ENCODE measurements at regions of chr1 and their contacts with region 1.

Region 1: DNA sequence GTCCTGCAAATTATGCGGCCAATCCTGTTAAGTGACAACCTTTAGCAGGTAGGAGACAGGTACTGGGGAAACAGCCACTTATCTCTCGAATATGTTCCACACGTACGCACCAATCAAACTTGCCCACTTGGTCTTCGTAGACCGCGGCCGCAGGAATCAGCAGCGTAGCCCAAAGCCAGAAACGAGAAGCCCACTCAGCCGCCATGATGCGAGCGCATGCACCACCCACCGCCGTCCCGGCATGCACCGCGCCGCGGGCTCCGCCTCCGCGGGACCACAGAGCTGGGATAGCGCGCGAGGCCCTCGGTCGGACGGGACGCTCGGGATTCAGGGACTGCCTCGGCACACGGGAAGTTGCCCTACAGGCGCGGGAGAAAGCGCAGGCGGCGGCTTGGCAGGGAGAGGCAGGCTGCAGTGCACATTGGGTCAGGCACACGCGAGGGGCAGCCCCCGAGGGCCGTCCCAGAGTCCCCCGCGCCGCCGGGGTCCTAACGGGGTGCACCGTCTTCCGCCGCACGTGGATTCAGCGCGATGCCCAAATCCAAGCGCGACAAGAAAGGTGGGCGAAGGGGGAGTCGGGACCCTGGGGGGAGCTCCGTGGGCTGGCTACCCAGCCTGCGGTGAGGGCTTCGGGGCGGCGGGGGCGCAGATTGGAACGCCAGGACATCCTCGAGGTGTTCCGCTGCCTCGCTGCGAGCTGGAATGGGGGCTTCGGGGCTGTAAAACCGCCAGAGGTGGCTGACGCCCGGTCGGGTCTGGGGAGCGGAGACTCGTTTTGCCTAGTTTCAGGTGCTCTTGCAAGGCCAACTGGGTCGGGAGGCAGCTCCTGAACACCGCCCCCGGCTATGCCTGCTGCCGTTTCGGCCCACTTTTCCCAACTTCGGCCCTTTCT is at the starts of genes EMC1 and MRTO4:
- DNase-seq: peak; percentile 65
- ATAC-seq: peak; percentile 93
- H3K4me3 ChIP-seq: peak within 1 kb of the TSS; percentile 98
- H3K27ac ChIP-seq: peak within 1 kb of the TSS; percentile 97
- H3K4me1 ChIP-seq: peaks cover 13% of the 10 kb centered on the region
- H3K27me3 ChIP-seq: no peaks in the 10 kb centered on the region
- CTCF ChIP-seq: no peak
- EP300 ChIP-seq: no peak; a peak in 1 of 4 replicates
- POLR2A ChIP-seq: peak; percentile 99
- RAD21 ChIP-seq: no peak
- polyA plus RNA-seq, gene EMC1: 12.2 to 12.8 TPM
- polyA plus RNA-seq, gene MRTO4: 43.5 to 64.8 TPM

Region 2: GRCh38 chr1:19101244-19101643 is 150.3 kb before region 1 on chr1:
- CTCF ChIA-PET with region 1: no interaction called
- POLR2A ChIA-PET with region 1: no interaction called
- RAD21 ChIA-PET with region 1: no interaction called
- SMC1A ChIA-PET with region 1: no interaction called
- in situ Hi-C with region 1: no loop called
- intact Hi-C with region 1: no loop called
- DNase-seq: no peak
- ATAC-seq: no peak
- H3K4me3 ChIP-seq: no peak overlapping the region
- H3K27ac ChIP-seq: no peak overlapping the region
- H3K4me1 ChIP-seq: no peaks in the 10 kb centered on the region
- H3K27me3 ChIP-seq: no peaks in the 10 kb centered on the region
- CTCF ChIP-seq: no peak
- EP300 ChIP-seq: no peak
- POLR2A ChIP-seq: no peak
- RAD21 ChIP-seq: no peak

Region 3: GRCh38 chr1:19139711-19140110 is 111.8 kb before region 1 on chr1:
- CTCF ChIA-PET with region 1: no interaction called
- POLR2A ChIA-PET with region 1: no interaction called
- RAD21 ChIA-PET with region 1: no interaction called
- SMC1A ChIA-PET with region 1: no interaction called
- in situ Hi-C with region 1: no loop called
- intact Hi-C with region 1: no loop called
- DNase-seq: no peak
- ATAC-seq: no peak
- H3K4me3 ChIP-seq: no peak overlapping the region
- H3K27ac ChIP-seq: no peak overlapping the region
- H3K4me1 ChIP-seq: no peaks in the 10 kb centered on the region
- H3K27me3 ChIP-seq: no peaks in the 10 kb centered on the region
- CTCF ChIP-seq: no peak
- EP300 ChIP-seq: no peak
- POLR2A ChIP-seq: no peak
- RAD21 ChIP-seq: no peak

Region 4: DNA sequence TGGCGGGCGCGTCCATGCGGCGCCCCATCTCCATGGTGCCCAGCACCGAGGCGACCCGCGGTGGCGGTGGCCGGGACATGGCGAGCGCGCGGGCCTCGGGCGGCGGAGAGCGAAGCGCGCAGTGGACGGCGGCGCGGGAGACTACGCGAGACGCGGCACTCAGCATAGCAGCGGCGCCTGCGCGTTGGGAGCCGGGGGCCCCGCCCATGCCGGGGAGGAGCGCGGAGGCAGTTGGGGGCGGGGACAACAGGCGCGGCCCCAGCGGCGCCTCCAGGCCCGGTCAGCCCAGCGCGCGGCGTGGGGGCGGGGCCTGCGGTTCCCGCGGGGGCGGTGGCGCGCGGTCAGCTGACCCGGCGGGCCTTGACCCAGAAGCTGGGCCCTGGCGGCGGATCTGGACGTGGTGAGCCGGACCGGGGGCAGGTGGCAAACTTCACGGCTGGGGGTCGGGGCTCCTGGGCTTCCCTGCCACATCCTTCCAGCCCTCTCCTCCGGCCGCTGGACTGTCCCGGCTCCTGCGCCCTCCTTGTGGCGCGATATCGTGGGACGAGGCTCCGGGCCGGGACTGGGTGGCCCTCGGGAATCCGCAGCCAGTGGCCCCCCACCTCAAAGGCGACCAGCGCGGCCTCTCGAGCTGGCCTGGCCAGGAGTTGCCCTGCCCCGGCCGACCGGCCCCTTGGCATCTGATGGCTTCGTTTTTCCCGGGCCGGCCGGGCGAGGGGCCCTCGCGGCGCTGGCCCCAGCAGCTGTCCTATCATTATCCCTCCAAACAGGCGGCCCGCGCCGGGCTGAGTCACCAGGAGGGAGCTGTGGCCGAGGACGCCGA is 60.6 kb after region 1 on chr1 and contains the starts of genes AKR7A2 and SLC66A1:
- CTCF ChIA-PET with region 1: no interaction called
- POLR2A ChIA-PET with region 1: interaction called, 9 read pairs
- RAD21 ChIA-PET with region 1: no interaction called
- SMC1A ChIA-PET with region 1: no interaction called
- in situ Hi-C with region 1: no loop called
- intact Hi-C with region 1: loop called (anchors 5 kb)
- DNase-seq: peak; percentile 49
- ATAC-seq: peak; percentile 85
- H3K4me3 ChIP-seq: peak within 1 kb of the TSS; percentile 92
- H3K27ac ChIP-seq: peak within 1 kb of the TSS; percentile 80
- H3K4me1 ChIP-seq: peaks cover 44% of the 10 kb centered on the region
- H3K27me3 ChIP-seq: no peaks in the 10 kb centered on the region
- CTCF ChIP-seq: peak in 1 of 3 experiments; percentile 7; a peak in 1 of 6 replicates
- EP300 ChIP-seq: no peak
- POLR2A ChIP-seq: peak; percentile 87
- RAD21 ChIP-seq: no peak
- polyA plus RNA-seq, gene AKR7A2: 1.3 to 9.8 TPM
- polyA plus RNA-seq, gene SLC66A1: 0.58 to 1.8 TPM

Measured in GM12878 (cell line).